Activated naive CD4-positive, alpha-beta T cell treated with anti-CD3 and anti-CD28 coated beads for 36 hours (primary cell): ENCODE measurements at regions of chr17 and their contacts with region 1.

Region 1: DNA sequence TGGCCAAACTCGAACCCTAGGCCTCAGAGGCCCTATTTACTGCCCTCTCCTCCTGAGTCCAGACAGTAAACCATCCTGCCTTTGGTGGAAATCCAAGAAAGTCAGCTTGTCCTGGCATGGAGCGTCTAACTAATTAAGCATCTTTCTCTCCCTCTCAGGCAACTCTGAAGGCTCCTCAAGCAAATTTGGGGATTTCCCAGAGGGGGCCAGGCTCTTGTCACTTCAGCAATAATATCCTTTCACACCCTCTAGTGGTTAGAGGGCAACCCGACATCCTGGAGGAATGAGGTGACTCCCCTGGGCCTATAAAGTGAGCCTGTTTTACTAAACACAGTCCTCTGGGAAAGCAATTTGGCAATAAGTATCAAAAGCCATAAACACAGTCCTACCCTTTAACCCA is 60.4 kb downstream of the NOG start:
- DNase-seq: peak; percentile 90
- H3K4me3 Mint-ChIP-seq: no peak overlapping the region
- H3K27ac Mint-ChIP-seq: no peak overlapping the region
- H3K4me1 Mint-ChIP-seq: peaks cover 5% of the 10 kb centered on the region
- H3K27me3 Mint-ChIP-seq: no peaks in the 10 kb centered on the region

Region 2: DNA sequence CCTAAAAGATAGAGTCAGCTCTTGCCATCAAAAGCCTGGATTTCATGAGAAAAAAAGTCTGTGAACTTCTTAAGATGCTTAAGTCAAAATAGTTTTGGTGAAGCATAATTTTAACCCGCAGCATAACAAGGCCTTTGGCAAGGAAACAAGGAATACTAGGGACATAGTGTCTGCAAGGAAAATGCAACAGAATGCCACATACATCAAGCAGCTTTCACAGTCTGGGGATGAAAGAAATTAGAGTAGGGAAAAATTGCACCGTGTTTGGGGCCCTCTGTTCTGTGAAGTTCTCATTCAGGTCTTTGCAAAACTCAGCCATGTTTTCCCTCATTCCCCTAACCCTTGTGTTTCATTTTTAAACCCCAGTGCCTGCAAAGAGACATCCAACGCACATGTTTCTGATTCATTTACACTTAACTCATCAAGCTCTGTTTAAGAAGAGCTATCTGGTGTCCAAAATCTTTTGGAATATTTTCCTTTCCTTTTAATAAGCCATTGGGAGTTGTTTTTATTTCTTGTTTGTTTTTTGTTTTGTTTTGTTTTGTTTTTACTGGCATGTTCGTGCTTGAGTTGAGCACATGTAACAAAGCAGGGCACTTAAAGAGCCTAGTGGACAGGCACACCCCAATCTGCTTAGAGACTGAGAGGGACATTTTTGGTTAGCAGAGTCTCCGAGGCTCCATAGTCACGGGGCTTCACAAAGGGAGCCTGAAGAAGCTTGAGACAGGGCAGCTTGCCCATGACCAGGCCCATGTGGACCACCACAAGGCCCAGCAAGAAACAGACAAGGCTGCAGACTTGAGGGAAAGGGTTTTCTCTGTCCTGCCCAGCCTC is 384.1 kb before region 1 on chr17:
- CTCF ChIA-PET with region 1: no interaction called
- intact Hi-C with region 1: no loop called
- DNase-seq: no peak
- H3K4me3 Mint-ChIP-seq: no peak overlapping the region
- H3K27ac Mint-ChIP-seq: no peak overlapping the region
- H3K4me1 Mint-ChIP-seq: no peaks in the 10 kb centered on the region
- H3K27me3 Mint-ChIP-seq: no peaks in the 10 kb centered on the region

Region 3: DNA sequence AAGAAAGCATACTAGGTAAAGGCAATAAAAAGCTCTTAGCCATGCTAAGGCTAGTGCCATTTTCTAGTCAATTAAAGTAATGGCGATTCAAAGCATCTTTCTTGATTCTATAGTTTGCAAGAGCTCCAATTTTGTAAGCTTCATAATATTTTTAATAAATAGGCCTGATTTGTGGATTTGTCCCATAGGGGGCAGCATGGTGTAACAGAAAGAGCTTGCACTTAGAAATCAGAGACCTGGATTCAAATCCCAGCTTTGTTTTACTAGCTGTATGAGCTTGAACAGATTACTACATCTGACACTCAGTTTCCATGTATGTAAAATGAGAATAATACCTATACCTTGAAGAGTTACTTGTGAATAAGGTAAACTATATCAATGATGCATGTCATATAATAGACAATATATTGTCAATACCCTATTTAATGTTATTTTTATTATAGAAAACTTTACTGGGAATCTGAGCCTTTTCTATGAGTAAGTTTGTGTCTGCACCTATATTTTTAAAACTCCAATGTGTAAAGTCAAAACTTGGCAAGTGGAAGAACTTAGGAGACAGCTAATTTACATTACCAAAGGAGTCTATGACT is 154.0 kb before region 1 on chr17:
- CTCF ChIA-PET with region 1: interaction called, 7 read pairs
- intact Hi-C with region 1: loop called (anchors 1 kb)
- DNase-seq: peak; percentile 64
- H3K4me3 Mint-ChIP-seq: no peak overlapping the region
- H3K27ac Mint-ChIP-seq: no peak overlapping the region
- H3K4me1 Mint-ChIP-seq: no peaks in the 10 kb centered on the region
- H3K27me3 Mint-ChIP-seq: no peaks in the 10 kb centered on the region